ENCODE measurements at regions of chr16 and their contacts with region 1.

Region 1: DNA sequence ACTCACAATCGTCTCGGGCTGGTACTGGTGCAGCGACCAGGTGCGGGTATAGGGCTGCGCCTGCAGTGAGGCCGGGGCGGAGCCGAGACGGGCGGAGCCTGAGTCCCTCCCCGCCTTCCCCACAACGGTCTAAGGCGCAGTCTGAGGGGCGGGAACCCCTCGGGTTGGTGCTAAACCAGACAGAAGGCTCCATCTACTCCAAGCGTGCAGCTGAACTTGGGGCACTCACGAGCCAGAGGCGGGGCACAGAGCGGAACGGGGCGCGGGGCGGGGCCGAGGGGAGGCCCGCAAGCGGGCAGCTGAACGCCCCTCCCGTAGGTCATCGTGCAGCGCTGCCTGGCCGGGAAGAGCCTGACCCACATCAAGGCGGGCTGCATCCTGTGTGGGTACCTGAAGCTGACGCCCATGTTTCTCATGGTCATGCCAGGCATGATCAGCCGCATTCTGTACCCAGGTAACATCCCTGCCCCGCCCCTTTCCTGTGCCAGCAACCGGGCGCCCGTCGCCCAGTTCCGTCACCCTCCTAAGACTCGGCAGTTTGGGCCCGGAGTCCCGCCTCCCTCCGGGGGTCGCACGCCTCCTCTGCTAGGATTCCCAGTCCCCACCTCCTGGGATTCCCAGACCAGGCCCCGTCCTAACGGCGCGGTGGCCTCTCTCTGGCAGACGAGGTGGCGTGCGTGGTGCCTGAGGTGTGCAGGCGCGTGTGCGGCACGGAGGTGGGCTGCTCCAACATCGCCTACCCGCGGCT is 5.0 kb downstream of the SLC5A2 start:
- DNase-seq: peak; percentile 81
- H3K4me3 ChIP-seq: peak overlapping the region; percentile 26 to 54 (median 41)
- H3K27ac ChIP-seq: peak overlapping the region; percentile 18 to 57 (median 30)
- H3K4me1 ChIP-seq: peaks cover 4 to 29% (median 17%) of the 10 kb centered on the region in 4 donors
- H3K27me3 ChIP-seq: peaks cover 8% of the 10 kb centered on the region
- CTCF ChIP-seq: no peak
- EP300 ChIP-seq: no peak
- POLR2A ChIP-seq: peak; percentile 52

Region 2: GRCh38 chr16:31286421-31287032 is 201.4 kb before region 1 on chr16:
- in situ Hi-C with region 1: no loop called
- intact Hi-C with region 1: no loop called
- DNase-seq: no peak
- H3K4me3 ChIP-seq: no peak overlapping the region
- H3K27ac ChIP-seq: no peak overlapping the region
- H3K4me1 ChIP-seq: no peaks in the 10 kb centered on the region
- H3K27me3 ChIP-seq: peaks cover 5% of the 10 kb centered on the region
- CTCF ChIP-seq: no peak
- EP300 ChIP-seq: no peak
- POLR2A ChIP-seq: no peak

Region 3: DNA sequence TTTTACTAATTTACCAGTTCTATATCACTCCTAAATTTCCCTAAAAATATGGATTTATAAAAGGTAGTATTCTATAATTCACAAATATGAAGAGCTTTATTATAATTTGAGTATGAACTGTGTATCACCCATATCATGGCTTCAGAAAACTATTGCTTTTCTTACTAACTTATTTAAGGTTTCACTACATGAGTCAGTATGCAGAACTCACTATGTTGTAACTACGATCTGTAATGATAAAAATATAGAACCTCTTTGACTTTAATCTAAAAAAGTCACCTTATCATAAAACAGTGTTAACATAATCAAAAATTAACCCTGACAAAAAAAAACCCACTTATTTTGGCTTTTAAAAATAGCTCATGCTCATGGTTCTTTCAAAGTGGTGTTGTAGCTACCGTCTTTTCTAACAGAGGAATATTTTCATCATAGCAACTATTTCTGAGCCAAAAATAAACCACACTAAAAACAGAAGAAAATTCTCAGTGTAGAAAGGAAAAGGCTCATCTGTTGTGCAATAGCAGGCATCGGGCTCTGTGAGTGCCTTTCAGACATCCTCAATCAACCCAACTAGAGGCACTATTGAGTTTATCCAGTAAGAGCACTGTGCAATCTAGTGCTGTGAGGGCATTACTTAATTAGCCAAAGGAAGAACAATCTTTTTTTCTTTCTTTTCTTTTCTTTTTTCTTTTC is 186.0 kb before region 1 on chr16:
- in situ Hi-C with region 1: no loop called
- intact Hi-C with region 1: no loop called
- DNase-seq: no peak
- H3K4me3 ChIP-seq: no peak overlapping the region
- H3K27ac ChIP-seq: no peak overlapping the region
- H3K4me1 ChIP-seq: no peaks in the 10 kb centered on the region
- H3K27me3 ChIP-seq: peaks cover 14% of the 10 kb centered on the region
- CTCF ChIP-seq: no peak
- EP300 ChIP-seq: no peak
- POLR2A ChIP-seq: no peak

Region 4: DNA sequence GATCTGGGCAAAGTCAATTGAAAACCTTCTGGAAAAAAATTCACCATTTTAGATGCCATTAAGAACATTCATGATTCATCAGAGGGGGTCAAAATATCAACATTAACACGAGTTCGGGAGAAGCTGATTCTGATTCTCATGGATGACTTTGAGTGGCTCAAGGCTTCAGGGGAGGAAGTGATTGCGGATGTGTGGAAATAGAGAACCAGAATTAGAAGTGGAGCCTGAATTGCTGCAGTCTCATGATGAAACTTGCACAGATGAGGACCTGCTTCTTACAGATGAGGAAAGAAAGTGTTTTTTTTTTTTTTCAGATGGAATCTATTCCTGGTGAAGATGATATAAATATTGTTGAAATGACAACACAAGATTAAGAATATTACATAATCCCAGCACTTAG is 120.0 kb before region 1 on chr16:
- in situ Hi-C with region 1: no loop called
- intact Hi-C with region 1: no loop called
- DNase-seq: no peak
- H3K4me3 ChIP-seq: no peak overlapping the region
- H3K27ac ChIP-seq: no peak overlapping the region
- H3K4me1 ChIP-seq: no peaks in the 10 kb centered on the region
- H3K27me3 ChIP-seq: no peaks in the 10 kb centered on the region
- CTCF ChIP-seq: no peak
- EP300 ChIP-seq: no peak
- POLR2A ChIP-seq: no peak

Region 5: GRCh38 chr16:31382485-31383161 is 105.3 kb before region 1 on chr16:
- in situ Hi-C with region 1: loop called in 1 of 4 experiments (anchors 25 kb)
- intact Hi-C with region 1: no loop called
- DNase-seq: peak; percentile 68
- H3K4me3 ChIP-seq: no peak overlapping the region
- H3K27ac ChIP-seq: no peak overlapping the region
- H3K4me1 ChIP-seq: peaks cover 0 to 4% (median 0%) of the 10 kb centered on the region in 4 donors
- H3K27me3 ChIP-seq: peaks cover 2% of the 10 kb centered on the region
- CTCF ChIP-seq: peak; percentile 46 to 59 (median 58)
- EP300 ChIP-seq: no peak
- POLR2A ChIP-seq: no peak

Region 6: DNA sequence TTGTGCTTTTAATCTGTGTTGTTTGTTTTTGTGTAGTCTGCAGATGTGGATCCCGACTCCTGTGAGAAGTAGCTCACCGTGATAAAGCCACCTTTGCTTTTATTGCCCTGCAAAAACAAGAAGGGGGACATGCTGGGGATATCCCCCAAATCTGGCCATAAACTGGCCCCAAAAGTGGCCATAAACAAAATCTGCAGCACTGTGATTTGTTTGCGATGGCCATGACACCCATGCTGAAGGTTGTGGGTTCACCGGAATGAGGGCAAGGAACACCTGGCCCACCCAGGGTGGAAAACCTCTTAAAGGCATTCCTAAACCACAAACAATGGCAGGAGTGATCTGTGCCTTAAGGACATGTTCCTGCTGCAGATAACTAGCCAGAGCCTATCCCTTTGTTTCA is 54.9 kb after region 1 on chr16:
- in situ Hi-C with region 1: no loop called
- intact Hi-C with region 1: no loop called
- DNase-seq: no peak
- H3K4me3 ChIP-seq: no peak overlapping the region
- H3K27ac ChIP-seq: no peak overlapping the region
- H3K4me1 ChIP-seq: no peaks in the 10 kb centered on the region
- H3K27me3 ChIP-seq: peaks cover 21% of the 10 kb centered on the region
- CTCF ChIP-seq: no peak
- EP300 ChIP-seq: no peak
- POLR2A ChIP-seq: no peak

Measured in transverse colon (tissue), 4 donors.